Esophagus squamous epithelium (tissue), 5 donors: ENCODE measurements at regions of chr9 and their contacts with region 1.

Region 1: DNA sequence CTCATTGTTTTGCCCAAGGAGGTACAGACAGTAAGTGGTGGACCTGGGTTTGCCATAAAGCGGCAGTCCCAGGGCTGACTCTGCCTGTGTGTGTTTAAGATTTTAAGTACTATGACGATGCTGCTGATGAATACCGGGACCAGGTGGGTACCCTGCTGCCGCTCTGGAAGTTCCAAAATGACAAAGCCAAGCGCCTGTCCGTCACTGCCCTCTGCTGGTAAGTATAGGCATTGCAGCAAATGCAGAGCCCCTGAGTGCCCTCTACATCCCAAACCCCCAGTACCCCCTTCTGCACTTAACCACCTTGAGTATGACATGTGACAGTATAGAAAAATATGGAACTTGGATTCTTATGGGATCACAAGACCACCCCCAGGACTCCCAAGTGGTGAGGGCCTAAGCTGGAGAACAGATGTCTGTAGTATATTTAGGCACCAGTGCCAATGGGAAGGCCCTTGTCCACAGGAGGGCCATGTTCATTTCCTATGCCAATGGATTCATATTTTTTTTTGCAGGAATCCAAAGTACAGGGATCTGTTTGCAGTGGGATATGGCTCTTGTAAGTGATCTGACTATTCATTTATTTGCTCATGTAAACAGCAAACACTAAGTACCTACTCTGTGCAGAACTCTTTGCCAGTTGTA is 22.0 kb downstream of the ENHO start:
- DNase-seq: no peak
- H3K4me3 ChIP-seq: no peak overlapping the region
- H3K27ac ChIP-seq: no peak overlapping the region
- H3K4me1 ChIP-seq: peaks cover 0 to 18% (median 10%) of the 10 kb centered on the region in 3 donors
- H3K27me3 ChIP-seq: no peaks in the 10 kb centered on the region
- CTCF ChIP-seq: peak; percentile 89 to 100 (median 92)
- POLR2A ChIP-seq: no peak

Region 2: GRCh38 chr9:34035656-34036055 is 465.1 kb before region 1 on chr9:
- intact Hi-C with region 1: no loop called
- DNase-seq: no peak
- H3K4me3 ChIP-seq: no peak overlapping the region
- H3K27ac ChIP-seq: no peak overlapping the region
- H3K4me1 ChIP-seq: peaks cover 0 to 9% (median 0%) of the 10 kb centered on the region in 3 donors
- H3K27me3 ChIP-seq: no peaks in the 10 kb centered on the region
- CTCF ChIP-seq: no peak
- POLR2A ChIP-seq: no peak

Region 3: DNA sequence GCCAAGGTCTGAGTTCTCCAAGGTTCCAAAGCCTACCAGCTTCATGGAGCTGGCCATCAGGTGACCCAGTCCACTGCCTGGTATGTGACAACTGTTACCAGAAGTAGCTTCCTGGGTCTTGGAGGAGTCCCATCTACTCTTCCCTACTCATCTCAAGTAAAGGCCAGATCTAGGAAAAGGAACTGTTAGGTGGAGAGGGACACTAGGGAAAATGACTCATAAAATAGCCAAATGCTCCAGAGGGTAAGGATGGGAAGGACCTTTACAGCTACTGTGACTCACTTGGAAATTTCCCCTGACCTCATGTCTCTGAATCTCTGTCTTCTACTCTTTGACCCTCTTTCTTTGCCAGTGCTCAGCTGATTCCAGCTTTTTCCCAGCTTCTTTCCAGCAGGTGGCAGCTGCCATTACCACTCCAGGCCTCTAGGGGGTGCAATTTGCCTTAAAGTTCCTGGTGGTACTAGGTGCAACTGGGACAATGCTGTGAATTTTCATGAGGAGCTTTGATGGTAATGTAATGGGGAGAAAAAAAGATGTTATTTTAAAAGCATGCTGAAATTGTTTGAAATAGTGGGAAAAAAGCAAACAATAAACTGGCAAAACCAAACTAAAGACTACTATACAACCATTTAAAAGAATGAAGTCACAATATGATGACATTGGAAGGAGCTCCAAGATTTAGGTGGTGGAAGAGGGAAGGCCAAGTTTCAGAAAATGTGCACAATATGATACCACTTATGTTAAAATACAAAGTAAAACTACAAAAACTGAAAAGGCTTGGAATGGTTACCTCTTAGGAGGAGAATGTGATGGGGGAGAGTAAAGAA is 97.0 kb before region 1 on chr9:
- intact Hi-C with region 1: loop called (anchors 5 kb)
- DNase-seq: no peak
- H3K4me3 ChIP-seq: no peak overlapping the region
- H3K27ac ChIP-seq: no peak overlapping the region
- H3K4me1 ChIP-seq: no peaks in the 10 kb centered on the region
- H3K27me3 ChIP-seq: no peaks in the 10 kb centered on the region
- CTCF ChIP-seq: peak; percentile 83 to 98 (median 95)
- POLR2A ChIP-seq: no peak

Region 4: DNA sequence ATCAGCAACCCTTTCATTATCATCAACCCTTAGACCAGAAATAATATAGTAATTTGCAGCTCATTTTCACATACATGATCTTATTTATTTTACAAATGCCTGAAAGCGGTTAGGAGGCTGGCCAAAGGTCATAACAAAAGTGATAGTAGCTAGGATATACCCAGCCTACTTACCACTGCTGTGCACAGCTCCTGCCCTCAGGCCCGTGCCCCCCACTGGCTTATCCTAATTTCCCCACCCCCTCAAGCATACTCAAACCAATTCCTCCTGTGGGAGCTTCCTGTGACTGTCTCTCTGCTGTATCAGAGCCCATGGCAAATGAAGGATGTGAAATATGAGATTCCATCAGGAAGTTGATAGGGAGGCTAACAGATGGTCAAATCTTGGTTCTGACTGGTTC is 57.2 kb before region 1 on chr9:
- intact Hi-C with region 1: loop called (anchors 5 kb)
- DNase-seq: no peak
- H3K4me3 ChIP-seq: no peak overlapping the region
- H3K27ac ChIP-seq: no peak overlapping the region
- H3K4me1 ChIP-seq: peaks cover 0 to 13% (median 0%) of the 10 kb centered on the region in 3 donors
- H3K27me3 ChIP-seq: no peaks in the 10 kb centered on the region
- CTCF ChIP-seq: no peak
- POLR2A ChIP-seq: no peak

Region 5: DNA sequence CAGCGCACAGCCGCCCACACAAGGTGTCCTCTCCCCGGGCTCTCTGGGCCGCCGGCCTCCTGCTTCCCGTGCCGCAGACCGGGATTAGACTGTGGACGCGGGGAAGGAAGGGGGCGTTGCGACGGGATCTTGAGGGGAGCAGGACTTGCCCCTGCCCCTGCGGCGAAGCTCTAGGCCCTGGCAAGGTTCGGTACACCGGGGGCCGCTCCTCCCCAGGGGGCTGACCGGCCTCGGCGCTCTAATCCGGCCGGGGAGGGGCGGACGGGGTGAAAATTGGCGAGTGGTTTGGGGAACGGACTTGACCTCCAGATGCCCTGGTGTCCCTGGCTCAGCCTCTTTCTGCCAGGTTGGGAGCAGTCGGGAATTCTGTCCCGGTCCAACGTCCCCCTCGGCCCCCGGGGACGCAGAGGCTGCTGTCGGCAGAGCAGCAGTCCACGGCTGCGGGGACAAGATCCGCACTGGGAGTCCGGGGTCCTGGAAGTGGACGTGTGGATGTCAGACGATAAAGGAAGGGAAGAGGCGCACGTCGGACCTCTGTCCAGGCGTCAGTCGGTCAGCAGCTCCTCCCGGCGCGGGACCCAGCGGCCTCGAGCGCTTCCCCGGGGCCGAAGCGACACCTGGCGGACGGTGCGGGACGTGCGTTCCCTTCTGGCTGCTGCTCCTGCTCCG is 90.6 kb after region 1 on chr9:
- intact Hi-C with region 1: loop called (anchors 10 kb)
- DNase-seq: no peak
- H3K4me3 ChIP-seq: peak overlapping the region; percentile 28 to 73 (median 56)
- H3K27ac ChIP-seq: peak overlapping the region in 3 of 4 donors; percentile 15 to 62 (median 55)
- H3K4me1 ChIP-seq: peaks cover 29 to 64% (median 31%) of the 10 kb centered on the region in 3 donors
- H3K27me3 ChIP-seq: peaks cover 0 to 82% (median 2%) of the 10 kb centered on the region in 4 donors
- CTCF ChIP-seq: peak; percentile 81 to 91 (median 86)
- POLR2A ChIP-seq: no peak